ENCODE measurements at regions of chr10 and their contacts with region 1.

Region 1: GRCh38 chr10:99560277-99561126 is 27.8 kb downstream of the NKX2-3 start:
- DNase-seq: no peak
- ATAC-seq: peak; percentile 57 to 89 (median 74)
- H3K4me3 ChIP-seq: no peak overlapping the region
- H3K27ac ChIP-seq: no peak overlapping the region
- H3K4me1 ChIP-seq: no peaks in the 10 kb centered on the region
- H3K27me3 ChIP-seq: peaks cover 0 to 20% (median 0%) of the 10 kb centered on the region in 3 donors
- CTCF ChIP-seq: peak; percentile 78

Region 2: GRCh38 chr10:99013885-99014284 is 546.6 kb before region 1 on chr10:
- intact Hi-C with region 1: no loop called
- DNase-seq: no peak
- ATAC-seq: no peak
- H3K4me3 ChIP-seq: no peak overlapping the region
- H3K27ac ChIP-seq: no peak overlapping the region
- H3K4me1 ChIP-seq: no peaks in the 10 kb centered on the region
- H3K27me3 ChIP-seq: no peaks in the 10 kb centered on the region
- CTCF ChIP-seq: no peak

Region 3: GRCh38 chr10:99412099-99412498 is 148.4 kb before region 1 on chr10:
- intact Hi-C with region 1: no loop called
- DNase-seq: no peak
- ATAC-seq: peak; percentile 86 to 90 (median 88)
- H3K4me3 ChIP-seq: no peak overlapping the region
- H3K27ac ChIP-seq: peak overlapping the region; percentile 39
- H3K4me1 ChIP-seq: peaks cover 23% of the 10 kb centered on the region
- H3K27me3 ChIP-seq: no peaks in the 10 kb centered on the region
- CTCF ChIP-seq: no peak

Region 4: GRCh38 chr10:99612167-99612831 is 51.8 kb after region 1 on chr10:
- intact Hi-C with region 1: loop called (anchors 1 to 2 kb)
- DNase-seq: no peak
- ATAC-seq: peak; percentile 60 to 83 (median 70)
- H3K4me3 ChIP-seq: no peak overlapping the region
- H3K27ac ChIP-seq: no peak overlapping the region
- H3K4me1 ChIP-seq: peaks cover 13% of the 10 kb centered on the region
- H3K27me3 ChIP-seq: no peaks in the 10 kb centered on the region
- CTCF ChIP-seq: peak; percentile 84

Region 5: DNA sequence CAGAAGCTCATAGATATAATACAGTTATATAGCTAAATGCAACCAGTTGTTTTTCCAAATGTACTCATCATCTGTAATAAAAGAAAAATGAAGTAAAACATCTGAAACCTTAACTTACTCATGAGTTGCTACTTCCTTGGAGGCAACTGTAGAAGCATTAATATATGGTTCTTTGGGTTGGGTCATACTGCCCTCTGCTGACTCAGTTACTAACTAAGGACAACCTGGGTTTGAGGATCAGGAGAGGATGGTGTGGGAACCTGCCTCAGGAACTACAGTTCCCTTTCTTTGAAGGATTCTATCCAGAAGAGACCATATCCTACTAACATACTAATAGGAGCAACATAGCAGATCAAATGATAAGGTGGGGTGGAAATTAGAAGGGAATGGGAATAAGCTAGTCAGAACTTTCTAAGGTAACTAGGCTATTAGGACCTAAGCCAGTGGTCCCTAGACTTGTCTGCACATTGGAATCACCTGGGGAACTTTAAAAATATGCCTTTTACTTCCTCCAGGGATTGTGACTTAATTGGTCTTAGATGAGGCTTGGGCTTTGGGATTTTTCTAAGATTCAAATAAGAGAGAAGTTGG is 150.7 kb after region 1 on chr10:
- intact Hi-C with region 1: loop called (anchors 2 to 5 kb)
- DNase-seq: no peak
- ATAC-seq: peak; percentile 72 to 89 (median 84)
- H3K4me3 ChIP-seq: no peak overlapping the region
- H3K27ac ChIP-seq: no peak overlapping the region
- H3K4me1 ChIP-seq: peaks cover 12% of the 10 kb centered on the region
- H3K27me3 ChIP-seq: no peaks in the 10 kb centered on the region
- CTCF ChIP-seq: peak; percentile 45